B cell (primary cell): ENCODE measurements at regions of chr11 and their contacts with region 1.

Region 1: GRCh38 chr11:111926505-111927391 is 8.0 kb downstream of the C11orf52 start:
- DNase-seq: peak; percentile 96
- ATAC-seq: peak; percentile 90
- H3K4me3 ChIP-seq: peak overlapping the region; percentile 51 to 82 (median 66)
- H3K4me3 Mint-ChIP-seq: peak overlapping the region; percentile 92
- H3K27ac ChIP-seq: peak overlapping the region; percentile 67 to 89
- H3K27ac Mint-ChIP-seq: peak overlapping the region; percentile 93
- H3K4me1 ChIP-seq: peaks cover 9 to 17% of the 10 kb centered on the region in 2 donors
- H3K4me1 Mint-ChIP-seq: peaks cover 16% of the 10 kb centered on the region
- H3K27me3 ChIP-seq: peaks cover 0 to 4% (median 0%) of the 10 kb centered on the region in 4 experiments
- H3K27me3 Mint-ChIP-seq: peaks cover 9% of the 10 kb centered on the region
- CTCF ChIP-seq: no peak

Region 2: GRCh38 chr11:111601979-111602864 is 324.5 kb before region 1 on chr11 and contains the start of gene SIK2:
- CTCF ChIA-PET with region 1: interaction called, 5 read pairs
- POLR2A ChIA-PET with region 1: no interaction called
- intact Hi-C with region 1: loop called (anchors 1 kb)
- DNase-seq: peak; percentile 96
- ATAC-seq: peak; percentile 93
- H3K4me3 ChIP-seq: peak within 1 kb of the TSS; percentile 75 to 96 (median 88)
- H3K4me3 Mint-ChIP-seq: peak within 1 kb of the TSS; percentile 98
- H3K27ac ChIP-seq: peak within 1 kb of the TSS; percentile 84 to 92
- H3K27ac Mint-ChIP-seq: peak within 1 kb of the TSS; percentile 94
- H3K4me1 ChIP-seq: peaks cover 14 to 21% of the 10 kb centered on the region in 2 donors
- H3K4me1 Mint-ChIP-seq: peaks cover 18% of the 10 kb centered on the region
- H3K27me3 ChIP-seq: no peaks in the 10 kb centered on the region
- H3K27me3 Mint-ChIP-seq: no peaks in the 10 kb centered on the region
- CTCF ChIP-seq: peak; percentile 77
- total RNA-seq, gene SIK2: 20.4 and 21.8 TPM in 2 replicates

Region 3: GRCh38 chr11:111777094-111778046 is 149.4 kb before region 1 on chr11:
- CTCF ChIA-PET with region 1: no interaction called
- POLR2A ChIA-PET with region 1: no interaction called
- intact Hi-C with region 1: loop called (anchors 2 kb)
- DNase-seq: peak; percentile 79
- ATAC-seq: peak; percentile 61
- H3K4me3 ChIP-seq: peak overlapping the region in 1 of 5 experiments; percentile 32
- H3K4me3 Mint-ChIP-seq: peak overlapping the region; percentile 82
- H3K27ac ChIP-seq: peak overlapping the region; percentile 63 to 76
- H3K27ac Mint-ChIP-seq: peak overlapping the region; percentile 91
- H3K4me1 ChIP-seq: peaks cover 17 to 21% of the 10 kb centered on the region in 2 donors
- H3K4me1 Mint-ChIP-seq: peaks cover 23% of the 10 kb centered on the region
- H3K27me3 ChIP-seq: no peaks in the 10 kb centered on the region
- H3K27me3 Mint-ChIP-seq: no peaks in the 10 kb centered on the region
- CTCF ChIP-seq: peak; percentile 81

Region 4: GRCh38 chr11:111982019-111982464 is 55.3 kb after region 1 on chr11:
- CTCF ChIA-PET with region 1: interaction called, 54 read pairs
- POLR2A ChIA-PET with region 1: no interaction called
- intact Hi-C with region 1: loop called (anchors 1 kb)
- DNase-seq: peak; percentile 47
- ATAC-seq: peak; percentile 47
- H3K4me3 ChIP-seq: no peak overlapping the region
- H3K4me3 Mint-ChIP-seq: no peak overlapping the region
- H3K27ac ChIP-seq: no peak overlapping the region
- H3K27ac Mint-ChIP-seq: no peak overlapping the region
- H3K4me1 ChIP-seq: peaks cover 8 to 9% of the 10 kb centered on the region in 2 donors
- H3K4me1 Mint-ChIP-seq: peaks cover 7% of the 10 kb centered on the region
- H3K27me3 ChIP-seq: peaks cover 0 to 33% (median 26%) of the 10 kb centered on the region in 4 experiments
- H3K27me3 Mint-ChIP-seq: peaks cover 35% of the 10 kb centered on the region
- CTCF ChIP-seq: peak; percentile 61

Region 5: DNA sequence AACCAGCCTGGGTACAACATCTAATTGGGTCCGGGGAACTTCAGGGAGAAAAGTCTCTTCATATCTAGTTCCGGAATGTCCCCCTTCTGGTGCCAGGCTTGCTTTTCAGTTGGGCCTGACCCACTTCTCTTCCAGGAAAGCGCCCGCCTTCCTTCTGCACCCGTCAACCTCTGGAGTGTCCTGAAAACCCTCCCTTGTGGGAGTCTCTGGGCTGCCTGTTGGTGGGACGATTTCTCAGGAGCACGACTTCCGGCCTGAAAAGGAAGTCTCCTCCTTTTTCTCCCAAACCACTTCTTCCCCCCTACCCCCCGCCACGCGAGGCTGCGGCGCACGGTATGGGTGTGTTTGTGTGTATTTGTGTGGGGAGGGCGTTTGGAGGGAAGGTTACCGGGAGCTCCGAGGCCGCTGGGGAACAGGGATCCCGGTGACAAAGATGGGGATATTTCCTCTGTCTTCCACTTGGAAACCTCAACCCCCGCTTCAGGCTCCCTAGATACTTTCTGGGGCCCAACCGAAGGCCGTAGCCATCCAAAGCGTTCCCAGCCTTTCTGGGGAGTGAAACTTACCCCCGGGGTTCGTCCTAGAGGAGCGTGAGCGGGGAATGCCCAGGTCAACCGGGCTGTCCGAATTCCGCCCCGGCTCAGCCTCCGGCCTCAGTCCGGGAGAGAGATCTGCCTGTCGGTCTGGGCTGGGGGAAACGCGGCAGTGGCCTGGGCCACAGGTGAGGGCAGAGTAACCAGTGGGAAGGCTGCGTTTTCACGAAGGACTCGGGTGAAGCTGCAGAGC is 147.5 kb after region 1 on chr11 and contains the start of gene NKAPD1:
- CTCF ChIA-PET with region 1: interaction called, 3 read pairs
- POLR2A ChIA-PET with region 1: no interaction called
- intact Hi-C with region 1: loop called (anchors 5 kb)
- DNase-seq: peak; percentile 95
- ATAC-seq: peak; percentile 85
- H3K4me3 ChIP-seq: peak within 1 kb of the TSS; percentile 78 to 98 (median 81)
- H3K4me3 Mint-ChIP-seq: peak within 1 kb of the TSS; percentile 97
- H3K27ac ChIP-seq: peak within 1 kb of the TSS; percentile 53 to 88
- H3K27ac Mint-ChIP-seq: peak within 1 kb of the TSS; percentile 97
- H3K4me1 ChIP-seq: peaks cover 12 to 13% of the 10 kb centered on the region in 2 donors
- H3K4me1 Mint-ChIP-seq: peaks cover 31% of the 10 kb centered on the region
- H3K27me3 ChIP-seq: no peaks in the 10 kb centered on the region
- H3K27me3 Mint-ChIP-seq: peaks cover 3% of the 10 kb centered on the region
- CTCF ChIP-seq: peak; percentile 23
- total RNA-seq, gene NKAPD1: 22.8 and 23.4 TPM in 2 replicates

Region 6: GRCh38 chr11:112200252-112200651 is 273.5 kb after region 1 on chr11:
- CTCF ChIA-PET with region 1: no interaction called
- POLR2A ChIA-PET with region 1: no interaction called
- intact Hi-C with region 1: no loop called
- DNase-seq: no peak
- ATAC-seq: no peak
- H3K4me3 ChIP-seq: no peak overlapping the region
- H3K4me3 Mint-ChIP-seq: no peak overlapping the region
- H3K27ac ChIP-seq: no peak overlapping the region
- H3K27ac Mint-ChIP-seq: no peak overlapping the region
- H3K4me1 ChIP-seq: peaks cover 4% of the 10 kb centered on the region in 2 donors
- H3K4me1 Mint-ChIP-seq: peaks cover 3% of the 10 kb centered on the region
- H3K27me3 ChIP-seq: no peaks in the 10 kb centered on the region
- H3K27me3 Mint-ChIP-seq: peaks cover 6% of the 10 kb centered on the region
- CTCF ChIP-seq: no peak

Region 7: GRCh38 chr11:112226062-112226830 is 299.5 kb after region 1 on chr11 and contains the start of gene PTS:
- CTCF ChIA-PET with region 1: interaction called, 3 read pairs
- POLR2A ChIA-PET with region 1: no interaction called
- intact Hi-C with region 1: loop called (anchors 2 kb)
- DNase-seq: peak; percentile 94
- ATAC-seq: peak; percentile 90
- H3K4me3 ChIP-seq: peak within 1 kb of the TSS; percentile 82 to 98 (median 92)
- H3K4me3 Mint-ChIP-seq: peak within 1 kb of the TSS; percentile 95
- H3K27ac ChIP-seq: peak within 1 kb of the TSS; percentile 99
- H3K27ac Mint-ChIP-seq: peak within 1 kb of the TSS; percentile 99
- H3K4me1 ChIP-seq: peaks cover 10 to 18% of the 10 kb centered on the region in 2 donors
- H3K4me1 Mint-ChIP-seq: peaks cover 23% of the 10 kb centered on the region
- H3K27me3 ChIP-seq: no peaks in the 10 kb centered on the region
- H3K27me3 Mint-ChIP-seq: no peaks in the 10 kb centered on the region
- CTCF ChIP-seq: no peak
- total RNA-seq, gene PTS: 36.2 and 36.7 TPM in 2 replicates

Region 8: DNA sequence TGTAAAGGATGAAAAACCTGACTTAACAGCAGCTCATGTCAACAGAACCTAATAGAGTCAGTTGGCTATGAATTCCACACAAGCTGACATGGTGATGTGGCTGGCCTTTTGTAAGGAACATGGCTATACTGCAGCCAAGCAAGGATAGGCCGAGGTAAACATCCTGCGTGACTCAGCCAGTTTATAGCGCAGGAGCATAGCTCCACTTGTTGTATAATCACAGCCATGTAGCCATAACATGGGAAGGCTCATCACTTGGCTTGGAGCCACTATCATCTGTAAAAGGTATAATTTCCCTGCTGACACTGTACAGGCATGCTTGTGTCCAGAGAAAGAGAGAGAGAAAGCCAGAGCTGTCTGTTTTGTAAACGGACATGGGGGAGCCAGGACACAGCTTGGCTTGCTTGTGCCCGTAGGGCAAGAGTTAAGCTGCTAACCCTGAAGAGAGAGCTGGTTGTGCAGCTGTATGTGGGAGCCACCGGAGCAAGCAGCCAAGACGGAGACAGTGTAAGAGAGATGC is 438.3 kb after region 1 on chr11:
- CTCF ChIA-PET with region 1: no interaction called
- POLR2A ChIA-PET with region 1: no interaction called
- intact Hi-C with region 1: no loop called
- DNase-seq: no peak
- ATAC-seq: no peak
- H3K4me3 ChIP-seq: no peak overlapping the region
- H3K4me3 Mint-ChIP-seq: no peak overlapping the region
- H3K27ac ChIP-seq: no peak overlapping the region
- H3K27ac Mint-ChIP-seq: no peak overlapping the region
- H3K4me1 ChIP-seq: no peaks in the 10 kb centered on the region
- H3K4me1 Mint-ChIP-seq: no peaks in the 10 kb centered on the region
- H3K27me3 ChIP-seq: no peaks in the 10 kb centered on the region
- H3K27me3 Mint-ChIP-seq: no peaks in the 10 kb centered on the region
- CTCF ChIP-seq: no peak